Activated CD4-positive, alpha-beta memory T cell treated with anti-CD3 and anti-CD28 coated beads for 36 hours (primary cell): ENCODE measurements at regions of chr2 and their contacts with region 1.

Region 1: DNA sequence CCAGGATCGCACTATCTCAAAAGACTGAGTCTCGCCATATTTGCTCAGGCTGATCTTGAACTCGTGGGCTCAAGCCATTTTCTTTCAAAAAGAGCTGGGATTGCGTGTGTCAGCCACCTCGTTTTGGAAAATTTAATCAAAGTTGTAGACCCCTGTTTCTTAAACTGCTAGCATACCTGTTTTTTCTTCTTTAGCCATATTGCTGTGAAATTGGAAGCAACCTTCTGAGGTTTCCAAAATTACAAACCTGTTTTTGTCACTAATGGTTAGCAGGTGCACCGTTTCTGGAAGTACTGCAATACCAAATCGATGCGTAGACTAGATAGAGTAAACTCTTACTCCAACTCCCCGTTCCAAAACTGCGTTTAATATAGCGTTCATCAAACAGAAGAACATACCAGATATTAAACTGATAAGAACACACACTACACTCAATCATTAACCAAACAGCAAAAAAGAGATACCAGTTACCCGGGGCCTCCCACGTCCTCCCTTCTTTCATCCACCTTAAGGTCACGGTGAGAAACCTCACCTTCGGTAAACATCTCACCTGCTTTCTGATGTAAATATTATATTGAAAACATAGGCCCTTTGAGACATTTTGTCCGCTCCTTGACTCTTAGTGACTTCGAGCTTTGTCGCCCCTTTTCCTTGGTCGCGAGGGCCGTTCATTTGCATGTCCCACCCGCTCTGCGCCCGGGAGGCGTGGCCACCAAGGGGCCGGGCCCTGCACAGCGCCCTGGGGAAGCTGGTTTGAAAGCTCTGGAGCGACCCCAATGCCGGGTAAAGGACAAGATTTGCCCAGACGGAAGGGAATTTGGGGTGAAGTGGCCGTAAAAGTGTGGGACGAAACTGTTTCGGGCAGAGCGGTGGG is at the start of gene RNU2-63P:
- DNase-seq: peak; percentile 80
- H3K4me3 Mint-ChIP-seq: peak within 1 kb of the TSS; percentile 88
- H3K27ac Mint-ChIP-seq: peak within 1 kb of the TSS; percentile 98
- H3K4me1 Mint-ChIP-seq: peaks cover 17% of the 10 kb centered on the region
- H3K27me3 Mint-ChIP-seq: no peaks in the 10 kb centered on the region
- total RNA-seq, gene RNU2-63P: 14.4 to 25.7 TPM

Region 2: GRCh38 chr2:88002359-88002707 is 14.0 kb before region 1 on chr2:
- CTCF ChIA-PET with region 1: interaction called, 10 read pairs
- POLR2A ChIA-PET with region 1: interaction called, 7 read pairs
- intact Hi-C with region 1: no loop called
- DNase-seq: no peak
- H3K4me3 Mint-ChIP-seq: no peak overlapping the region
- H3K27ac Mint-ChIP-seq: no peak overlapping the region
- H3K4me1 Mint-ChIP-seq: peaks cover 10% of the 10 kb centered on the region
- H3K27me3 Mint-ChIP-seq: no peaks in the 10 kb centered on the region

Region 3: GRCh38 chr2:88038263-88039105 is 22.2 kb after region 1 on chr2:
- CTCF ChIA-PET with region 1: no interaction called
- POLR2A ChIA-PET with region 1: interaction called, 22 read pairs
- intact Hi-C with region 1: no loop called
- DNase-seq: no peak
- H3K4me3 Mint-ChIP-seq: no peak overlapping the region
- H3K27ac Mint-ChIP-seq: peak overlapping the region; percentile 57
- H3K4me1 Mint-ChIP-seq: peaks cover 47% of the 10 kb centered on the region
- H3K27me3 Mint-ChIP-seq: no peaks in the 10 kb centered on the region